PC-9 (cell line): ENCODE measurements at regions of chr4 and their contacts with region 1.

Region 1: DNA sequence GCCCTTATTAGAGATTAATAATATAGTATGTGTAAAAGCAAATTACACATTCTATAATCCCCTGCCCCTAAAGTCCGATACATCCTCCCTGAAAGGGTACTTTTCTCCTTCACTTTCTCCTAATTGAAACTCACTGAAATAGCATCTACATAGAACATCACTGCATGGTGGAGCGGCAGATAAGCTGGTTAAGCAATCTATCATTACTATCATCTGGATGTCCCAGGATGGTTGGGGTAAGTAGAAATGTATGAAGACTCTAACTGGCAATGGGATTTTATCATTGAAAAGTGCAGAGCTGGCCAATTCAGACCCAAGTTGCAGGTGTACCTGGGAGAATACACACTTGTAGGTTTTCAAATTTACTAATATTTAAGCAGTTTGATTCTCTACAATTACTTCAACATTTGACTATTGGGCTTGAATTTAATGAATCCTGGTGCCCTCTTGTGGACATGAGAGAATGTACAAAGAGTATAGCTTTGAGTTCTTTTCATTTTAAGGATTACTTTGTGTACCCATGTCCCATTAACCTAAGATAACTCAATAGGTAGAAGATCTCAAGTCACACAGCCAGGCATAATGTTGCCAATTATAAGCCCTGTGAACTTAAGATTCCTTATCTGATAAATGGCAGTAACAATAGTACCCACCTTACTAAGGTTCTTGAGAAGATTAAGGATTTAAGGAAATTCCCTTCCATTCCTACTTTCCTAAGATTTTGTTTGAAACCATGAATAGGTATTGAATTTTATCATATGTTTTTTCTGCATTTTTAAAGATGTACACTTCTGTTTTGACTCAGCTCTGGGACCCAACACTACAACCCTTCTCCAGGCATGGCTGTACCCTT is 69.8 kb downstream of the SHROOM3 start:
- DNase-seq: no peak
- H3K4me3 ChIP-seq: no peak overlapping the region
- H3K27ac ChIP-seq: no peak overlapping the region
- H3K4me1 ChIP-seq: no peaks in the 10 kb centered on the region
- H3K27me3 ChIP-seq: no peaks in the 10 kb centered on the region
- CTCF ChIP-seq: peak; percentile 77

Region 2: DNA sequence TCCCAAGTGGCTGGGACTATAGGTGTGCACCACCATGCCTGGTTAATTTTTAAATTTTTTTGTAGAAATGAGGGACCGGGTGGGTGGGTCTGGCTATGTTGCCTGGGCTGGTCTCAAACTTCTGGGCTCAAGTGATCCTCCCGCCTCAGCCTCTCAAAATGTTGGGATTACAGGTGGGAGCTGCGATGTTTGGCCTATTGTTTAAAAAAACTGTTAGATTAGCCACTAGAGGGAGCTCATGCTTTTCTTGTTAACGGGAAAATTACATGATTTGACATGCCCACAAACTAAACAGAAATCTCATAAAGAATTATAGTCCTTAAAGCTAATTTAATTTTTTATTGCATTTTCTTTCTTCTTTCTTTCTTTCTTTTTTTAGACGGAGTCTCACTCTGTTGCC is 509.1 kb before region 1 on chr4:
- CTCF ChIA-PET with region 1: no interaction called
- POLR2A ChIA-PET with region 1: no interaction called
- intact Hi-C with region 1: loop called (anchors 10 kb)
- DNase-seq: peak in 1 of 2 experiments; percentile 44
- H3K4me3 ChIP-seq: no peak overlapping the region
- H3K27ac ChIP-seq: no peak overlapping the region
- H3K4me1 ChIP-seq: peaks cover 4% of the 10 kb centered on the region; the same call in 1 of the 2 replicates
- H3K27me3 ChIP-seq: no peaks in the 10 kb centered on the region
- CTCF ChIP-seq: peak; percentile 76

Region 3: DNA sequence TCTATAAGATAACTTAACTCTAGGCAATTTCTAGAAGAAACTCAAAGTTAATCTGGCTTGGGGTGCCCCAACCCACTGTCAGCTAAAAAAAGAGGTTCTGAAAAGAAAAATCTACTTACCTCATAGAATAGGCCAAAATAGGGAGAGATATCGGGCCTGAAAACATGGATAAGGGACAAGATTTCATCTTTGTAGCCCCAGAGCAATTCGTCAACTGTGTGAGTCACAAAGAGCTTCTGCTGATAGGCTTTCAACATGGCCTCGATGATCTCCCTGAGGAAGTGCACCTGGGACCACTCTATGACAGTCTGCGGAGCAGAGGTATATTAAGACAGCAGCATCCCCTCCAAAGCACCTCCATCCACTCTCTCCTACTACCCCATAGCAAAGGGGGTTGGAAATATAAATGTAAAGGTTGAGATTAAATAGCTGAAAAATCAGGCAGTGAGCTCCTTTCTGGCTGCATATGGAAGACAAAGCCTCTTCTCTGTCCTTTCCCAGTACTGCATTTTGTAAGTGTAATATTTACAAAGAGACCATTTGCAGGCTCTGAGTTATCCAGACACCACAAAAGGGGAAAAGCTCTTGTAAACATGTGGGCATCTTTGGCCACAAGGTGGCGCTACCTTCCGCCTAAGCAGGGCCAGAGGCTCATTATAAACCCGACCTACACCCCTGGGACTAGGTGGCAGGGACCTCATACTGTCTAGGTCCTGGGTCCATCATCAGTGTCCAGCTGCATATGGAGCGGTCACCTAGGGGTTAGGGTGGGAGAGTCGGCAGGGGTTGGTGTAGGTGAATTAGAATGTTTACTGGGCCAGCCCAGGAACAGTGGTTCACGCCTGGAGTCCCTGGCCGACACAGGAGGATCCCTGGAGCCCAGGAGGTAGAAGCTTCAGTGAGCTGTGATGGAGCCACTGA is 325.2 kb before region 1 on chr4:
- CTCF ChIA-PET with region 1: no interaction called
- POLR2A ChIA-PET with region 1: no interaction called
- intact Hi-C with region 1: loop called (anchors 5 kb)
- DNase-seq: peak in 1 of 2 experiments; percentile 64
- H3K4me3 ChIP-seq: no peak overlapping the region
- H3K27ac ChIP-seq: no peak overlapping the region
- H3K4me1 ChIP-seq: no peaks in the 10 kb centered on the region
- H3K27me3 ChIP-seq: no peaks in the 10 kb centered on the region
- CTCF ChIP-seq: peak; percentile 87

Region 4: GRCh38 chr4:76430519-76431388 is 74.1 kb before region 1 on chr4:
- CTCF ChIA-PET with region 1: interaction called, 10 read pairs
- POLR2A ChIA-PET with region 1: no interaction called
- intact Hi-C with region 1: loop called (anchors 1 kb)
- DNase-seq: peak in 1 of 2 experiments; percentile 55
- H3K4me3 ChIP-seq: peak overlapping the region; percentile 33; the same call in 1 of the 2 replicates
- H3K27ac ChIP-seq: no peak overlapping the region
- H3K4me1 ChIP-seq: no peaks in the 10 kb centered on the region
- H3K27me3 ChIP-seq: no peaks in the 10 kb centered on the region
- CTCF ChIP-seq: peak; percentile 75

Region 5: DNA sequence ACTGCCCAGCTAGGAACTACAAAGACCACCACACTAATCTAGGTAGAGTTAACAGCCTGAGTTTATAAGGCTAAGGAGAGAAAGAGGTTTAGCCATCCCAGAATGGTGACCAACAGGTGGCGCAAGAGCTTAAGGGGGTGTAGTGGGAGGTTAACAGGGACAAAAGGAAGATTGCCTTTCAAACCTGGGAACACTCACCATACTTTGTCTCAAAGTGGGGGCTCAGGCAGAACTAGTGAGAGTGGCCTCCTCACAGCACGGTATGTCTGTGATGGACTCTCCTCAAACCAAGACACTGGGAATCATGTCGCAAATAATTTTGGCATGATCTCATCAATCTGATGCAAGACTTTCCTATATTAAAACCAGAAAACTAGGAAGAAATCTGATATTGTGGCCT is 547.5 kb after region 1 on chr4:
- CTCF ChIA-PET with region 1: no interaction called
- POLR2A ChIA-PET with region 1: no interaction called
- intact Hi-C with region 1: no loop called
- DNase-seq: peak in 1 of 2 experiments; percentile 34
- H3K4me3 ChIP-seq: no peak overlapping the region
- H3K27ac ChIP-seq: peak overlapping the region; percentile 34; the same call in 1 of the 2 replicates
- H3K4me1 ChIP-seq: no peaks in the 10 kb centered on the region
- H3K27me3 ChIP-seq: no peaks in the 10 kb centered on the region
- CTCF ChIP-seq: peak; percentile 40; the same call in 1 of the 2 replicates